HepG2 (cell line): ENCODE measurements at regions of chr12 and their contacts with region 1.

Region 1: GRCh38 chr12:45728630-45729232 is 775 bp upstream of the ARID2 start:
- DNase-seq: peak; percentile 92
- ATAC-seq: peak; percentile 78
- H3K4me3 ChIP-seq: peak overlapping the region; percentile 97 to 99 (median 98)
- H3K27ac ChIP-seq: peak overlapping the region; percentile 95
- H3K4me1 ChIP-seq: peaks cover 35% of the 10 kb centered on the region
- H3K27me3 ChIP-seq: no peaks in the 10 kb centered on the region; a peak in 1 of 5 replicates
- CTCF ChIP-seq: peak; percentile 95
- EP300 ChIP-seq: peak; percentile 26 to 39; a peak in 2 of 4 replicates
- POLR2A ChIP-seq: peak; percentile 83 to 87
- RAD21 ChIP-seq: peak; percentile 82

Region 2: GRCh38 chr12:45183246-45183645 is 545.5 kb before region 1 on chr12:
- CTCF ChIA-PET with region 1: no interaction called
- POLR2A ChIA-PET with region 1: no interaction called
- in situ Hi-C with region 1: loop called (anchors 25 kb)
- intact Hi-C with region 1: no loop called
- DNase-seq: peak; percentile 13
- ATAC-seq: no peak
- H3K4me3 ChIP-seq: no peak overlapping the region
- H3K27ac ChIP-seq: no peak overlapping the region
- H3K4me1 ChIP-seq: peaks cover under 1% of the 10 kb centered on the region; the same call in 1 of the 2 replicates
- H3K27me3 ChIP-seq: no peaks in the 10 kb centered on the region
- CTCF ChIP-seq: peak; percentile 51
- EP300 ChIP-seq: no peak
- POLR2A ChIP-seq: no peak
- RAD21 ChIP-seq: no peak

Region 3: DNA sequence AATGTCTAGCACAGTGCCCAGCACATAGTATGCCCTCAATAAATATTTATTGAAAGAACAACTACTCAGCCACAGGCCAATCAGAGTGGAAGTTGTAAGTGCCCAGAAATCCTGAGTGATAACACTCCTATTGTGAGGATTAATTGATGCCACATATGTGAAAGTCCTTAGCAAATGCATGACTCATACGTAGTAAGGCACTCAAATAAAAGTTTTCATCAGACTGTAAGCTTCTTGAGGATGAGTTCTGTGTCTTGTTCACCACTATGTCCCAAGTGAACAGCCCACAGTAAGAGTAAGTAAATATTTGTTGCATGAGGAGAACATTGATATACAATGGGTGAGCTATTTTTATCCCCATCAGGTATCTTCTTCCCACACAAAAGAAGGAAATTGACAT is 537.5 kb before region 1 on chr12:
- CTCF ChIA-PET with region 1: no interaction called
- POLR2A ChIA-PET with region 1: no interaction called
- in situ Hi-C with region 1: loop called (anchors 25 kb)
- intact Hi-C with region 1: loop called (anchors 5 kb)
- DNase-seq: peak; percentile 10
- ATAC-seq: no peak
- H3K4me3 ChIP-seq: no peak overlapping the region
- H3K27ac ChIP-seq: peak overlapping the region; percentile 31
- H3K4me1 ChIP-seq: peaks cover 53% of the 10 kb centered on the region
- H3K27me3 ChIP-seq: no peaks in the 10 kb centered on the region
- CTCF ChIP-seq: no peak
- EP300 ChIP-seq: no peak
- POLR2A ChIP-seq: no peak
- RAD21 ChIP-seq: no peak